ENCODE measurements at regions of chr2 and their contacts with region 1.

Region 1: DNA sequence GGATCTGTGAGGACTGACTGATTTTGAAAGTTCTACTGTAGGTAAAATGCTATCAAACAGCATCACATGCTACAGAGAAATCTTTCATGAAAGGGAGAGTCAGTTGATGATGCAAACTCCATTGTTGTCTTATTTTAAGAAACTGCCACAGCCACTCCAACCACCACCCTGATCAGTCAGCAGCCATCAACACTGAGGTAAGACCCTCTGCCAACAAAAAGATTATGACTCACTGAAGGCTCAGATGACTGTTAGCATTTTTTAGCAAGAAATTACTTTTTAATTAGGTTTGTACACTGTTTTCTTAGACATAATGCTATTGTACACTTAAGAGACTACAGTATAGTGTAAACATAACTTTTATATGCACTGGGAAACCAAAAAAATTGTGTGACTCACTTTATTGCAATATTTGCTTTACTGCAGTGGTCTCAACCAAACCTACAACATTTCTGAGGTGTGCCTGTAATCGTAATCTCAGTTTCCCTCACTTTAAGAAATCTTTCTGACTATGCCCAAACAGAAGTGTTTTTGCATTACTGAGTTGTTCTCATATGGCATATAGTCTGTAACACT is 42.8 kb downstream of the METTL8 start:
- DNase-seq: no peak
- ATAC-seq: peak; percentile 83
- H3K4me3 ChIP-seq: no peak overlapping the region
- H3K27ac ChIP-seq: peak overlapping the region; percentile 64
- H3K4me1 ChIP-seq: peaks cover 48% of the 10 kb centered on the region
- H3K27me3 ChIP-seq: no peaks in the 10 kb centered on the region
- CTCF ChIP-seq: no peak
- EP300 ChIP-seq: peak; percentile 58 to 64; a peak in 2 of 4 replicates
- POLR2A ChIP-seq: no peak
- RAD21 ChIP-seq: no peak

Region 2: GRCh38 chr2:169727065-169727464 is 1664.0 kb before region 1 on chr2:
- CTCF ChIA-PET with region 1: no interaction called
- POLR2A ChIA-PET with region 1: no interaction called
- RAD21 ChIA-PET with region 1: no interaction called
- SMC1A ChIA-PET with region 1: no interaction called
- in situ Hi-C with region 1: no loop called
- intact Hi-C with region 1: no loop called
- DNase-seq: no peak
- ATAC-seq: no peak
- H3K4me3 ChIP-seq: no peak overlapping the region
- H3K27ac ChIP-seq: no peak overlapping the region
- H3K4me1 ChIP-seq: no peaks in the 10 kb centered on the region
- H3K27me3 ChIP-seq: no peaks in the 10 kb centered on the region
- CTCF ChIP-seq: no peak
- EP300 ChIP-seq: no peak
- POLR2A ChIP-seq: no peak
- RAD21 ChIP-seq: no peak

Region 3: DNA sequence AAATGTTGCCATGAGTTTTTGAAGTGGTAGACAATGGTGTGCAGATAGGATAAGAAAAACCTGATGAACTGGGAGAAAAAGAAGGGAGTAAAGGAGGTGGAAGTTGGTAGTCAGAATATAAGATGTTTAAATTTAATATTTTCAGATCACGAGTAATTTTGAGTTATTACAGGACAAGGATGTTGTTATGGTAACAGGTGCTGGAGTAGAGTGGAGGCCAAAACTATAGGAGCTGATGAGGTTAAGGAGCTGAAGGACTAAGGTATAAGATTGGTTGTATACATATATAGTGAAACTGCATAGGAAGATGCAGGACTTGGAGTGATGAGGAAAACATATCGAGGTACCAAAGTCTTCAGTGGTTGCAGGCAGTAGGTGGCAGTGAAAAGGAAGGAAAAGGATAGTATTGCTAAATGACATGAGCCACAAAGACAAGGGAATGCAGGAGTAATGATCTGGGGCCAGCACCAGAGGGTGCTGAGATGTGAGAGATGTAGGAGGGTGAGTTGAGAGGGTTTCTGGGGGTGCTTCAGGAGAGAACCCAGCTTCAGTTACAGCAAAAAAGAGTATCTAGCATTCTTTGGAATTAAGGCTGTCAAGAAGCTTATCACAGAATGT is 1385.4 kb before region 1 on chr2:
- CTCF ChIA-PET with region 1: no interaction called
- POLR2A ChIA-PET with region 1: no interaction called
- RAD21 ChIA-PET with region 1: no interaction called
- SMC1A ChIA-PET with region 1: no interaction called
- in situ Hi-C with region 1: no loop called
- intact Hi-C with region 1: no loop called
- DNase-seq: no peak
- ATAC-seq: peak; percentile 37; the same call in 1 of the 3 replicates
- H3K4me3 ChIP-seq: no peak overlapping the region
- H3K27ac ChIP-seq: no peak overlapping the region
- H3K4me1 ChIP-seq: no peaks in the 10 kb centered on the region
- H3K27me3 ChIP-seq: no peaks in the 10 kb centered on the region
- CTCF ChIP-seq: peak in 2 of 3 experiments; percentile 32 to 34; a peak in 2 of 6 replicates
- EP300 ChIP-seq: no peak
- POLR2A ChIP-seq: no peak
- RAD21 ChIP-seq: peak; percentile 25; the same call in 1 of the 2 replicates

Region 4: GRCh38 chr2:171334171-171334570 is 56.9 kb before region 1 on chr2:
- CTCF ChIA-PET with region 1: interaction called, 7 read pairs
- POLR2A ChIA-PET with region 1: interaction called, 7 read pairs
- RAD21 ChIA-PET with region 1: interaction called, 7 read pairs
- SMC1A ChIA-PET with region 1: interaction called, 12 read pairs
- in situ Hi-C with region 1: no loop called
- intact Hi-C with region 1: no loop called
- DNase-seq: no peak
- ATAC-seq: no peak
- H3K4me3 ChIP-seq: no peak overlapping the region
- H3K27ac ChIP-seq: peak overlapping the region; percentile 78
- H3K4me1 ChIP-seq: peaks cover 31% of the 10 kb centered on the region
- H3K27me3 ChIP-seq: no peaks in the 10 kb centered on the region
- CTCF ChIP-seq: no peak
- EP300 ChIP-seq: no peak
- POLR2A ChIP-seq: no peak
- RAD21 ChIP-seq: no peak

Region 5: DNA sequence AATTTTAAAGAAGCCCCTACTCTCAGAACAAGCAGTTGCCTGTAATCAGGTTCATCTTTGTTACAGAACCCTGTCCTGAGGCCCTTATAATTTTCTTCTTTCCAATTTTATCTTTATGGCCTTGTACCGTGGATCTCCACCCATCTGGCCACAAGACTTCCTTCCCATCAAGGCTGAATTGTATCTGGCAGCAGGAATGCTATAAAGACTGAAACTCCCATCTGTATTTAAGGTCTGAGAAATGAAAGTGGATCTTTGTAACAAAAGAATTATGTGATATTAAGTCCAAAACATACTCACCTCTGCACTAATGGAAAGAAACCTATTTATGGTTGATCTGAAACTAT is 49.0 kb before region 1 on chr2:
- CTCF ChIA-PET with region 1: interaction called, 8 read pairs
- POLR2A ChIA-PET with region 1: interaction called, 3 read pairs
- RAD21 ChIA-PET with region 1: interaction called, 20 read pairs
- SMC1A ChIA-PET with region 1: interaction called, 20 read pairs
- in situ Hi-C with region 1: no loop called
- intact Hi-C with region 1: no loop called
- DNase-seq: no peak
- ATAC-seq: peak; percentile 10; the same call in 2 of the 3 replicates
- H3K4me3 ChIP-seq: no peak overlapping the region
- H3K27ac ChIP-seq: peak overlapping the region; percentile 69
- H3K4me1 ChIP-seq: peaks cover 23% of the 10 kb centered on the region
- H3K27me3 ChIP-seq: no peaks in the 10 kb centered on the region
- CTCF ChIP-seq: no peak
- EP300 ChIP-seq: no peak
- POLR2A ChIP-seq: no peak
- RAD21 ChIP-seq: no peak